Prostate gland (tissue), 2 donors: ENCODE measurements at regions of chr15 and their contacts with region 1.

Region 1: GRCh38 chr15:70097337-70098169 is at the start of gene TLE3:
- DNase-seq: peak; percentile 100
- H3K4me3 ChIP-seq: peak within 1 kb of the TSS; percentile 95 to 96
- H3K27ac ChIP-seq: peak within 1 kb of the TSS; percentile 97 to 98
- H3K4me1 ChIP-seq: peaks cover 5% of the 10 kb centered on the region
- H3K27me3 ChIP-seq: no peaks in the 10 kb centered on the region
- CTCF ChIP-seq: peak; percentile 26 to 86 (median 52)
- POLR2A ChIP-seq: peak; percentile 99
- total RNA-seq, gene TLE3: 157 to 246 TPM

Region 2: GRCh38 chr15:69583626-69584025 is 513.9 kb before region 1 on chr15:
- intact Hi-C with region 1: loop called (anchors 10 kb)
- DNase-seq: no peak
- H3K4me3 ChIP-seq: no peak overlapping the region
- H3K27ac ChIP-seq: no peak overlapping the region
- H3K4me1 ChIP-seq: peaks cover 3% of the 10 kb centered on the region
- H3K27me3 ChIP-seq: no peaks in the 10 kb centered on the region
- CTCF ChIP-seq: no peak
- POLR2A ChIP-seq: no peak

Region 3: GRCh38 chr15:69794645-69795461 is 302.7 kb before region 1 on chr15:
- intact Hi-C with region 1: no loop called
- DNase-seq: no peak
- H3K4me3 ChIP-seq: no peak overlapping the region
- H3K27ac ChIP-seq: peak overlapping the region in 1 of 2 donors; percentile 4
- H3K4me1 ChIP-seq: no peaks in the 10 kb centered on the region
- H3K27me3 ChIP-seq: no peaks in the 10 kb centered on the region
- CTCF ChIP-seq: no peak
- POLR2A ChIP-seq: no peak

Region 4: GRCh38 chr15:70062321-70062956 is 35.1 kb before region 1 on chr15:
- intact Hi-C with region 1: loop called (anchors 2 kb)
- DNase-seq: peak; percentile 83
- H3K4me3 ChIP-seq: no peak overlapping the region
- H3K27ac ChIP-seq: peak overlapping the region in 1 of 2 donors; percentile 41
- H3K4me1 ChIP-seq: peaks cover 7% of the 10 kb centered on the region
- H3K27me3 ChIP-seq: no peaks in the 10 kb centered on the region
- CTCF ChIP-seq: peak in 1 of 4 experiments; percentile 7
- POLR2A ChIP-seq: no peak

Region 5: GRCh38 chr15:70152070-70152480 is 54.5 kb after region 1 on chr15:
- intact Hi-C with region 1: no loop called
- DNase-seq: peak; percentile 55
- H3K4me3 ChIP-seq: no peak overlapping the region
- H3K27ac ChIP-seq: no peak overlapping the region
- H3K4me1 ChIP-seq: no peaks in the 10 kb centered on the region
- H3K27me3 ChIP-seq: no peaks in the 10 kb centered on the region
- CTCF ChIP-seq: no peak
- POLR2A ChIP-seq: no peak

Region 6: GRCh38 chr15:70318594-70319465 is 221.3 kb after region 1 on chr15:
- intact Hi-C with region 1: loop called (anchors 5 kb)
- DNase-seq: peak; percentile 48
- H3K4me3 ChIP-seq: no peak overlapping the region
- H3K27ac ChIP-seq: peak overlapping the region; percentile 24 to 38
- H3K4me1 ChIP-seq: peaks cover 23% of the 10 kb centered on the region
- H3K27me3 ChIP-seq: no peaks in the 10 kb centered on the region
- CTCF ChIP-seq: no peak
- POLR2A ChIP-seq: no peak

Region 7: DNA sequence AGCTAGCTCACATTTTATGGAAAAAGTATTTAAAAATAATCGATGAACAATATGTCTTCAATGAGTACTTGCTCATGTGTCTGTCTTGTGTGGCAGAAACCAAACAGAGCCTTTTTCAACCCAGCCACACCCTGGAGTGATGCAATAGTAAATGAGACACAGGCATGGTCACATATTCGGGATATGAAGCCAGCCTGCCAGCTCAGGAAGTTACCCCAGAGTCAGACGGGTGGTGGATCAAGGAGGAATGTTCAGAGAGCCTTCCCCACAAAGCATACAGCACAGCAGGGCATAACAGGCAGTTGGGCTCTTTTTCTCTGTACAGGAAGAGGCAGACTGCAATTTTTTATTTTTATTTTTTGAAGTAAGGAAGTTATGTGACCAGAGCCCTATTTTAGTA is 729.1 kb after region 1 on chr15:
- intact Hi-C with region 1: no loop called
- DNase-seq: no peak
- H3K4me3 ChIP-seq: no peak overlapping the region
- H3K27ac ChIP-seq: no peak overlapping the region
- H3K4me1 ChIP-seq: no peaks in the 10 kb centered on the region
- H3K27me3 ChIP-seq: no peaks in the 10 kb centered on the region
- CTCF ChIP-seq: no peak
- POLR2A ChIP-seq: no peak